HEK293 (cell line): ENCODE measurements at regions of chr15 and their contacts with region 1.

Region 1: DNA sequence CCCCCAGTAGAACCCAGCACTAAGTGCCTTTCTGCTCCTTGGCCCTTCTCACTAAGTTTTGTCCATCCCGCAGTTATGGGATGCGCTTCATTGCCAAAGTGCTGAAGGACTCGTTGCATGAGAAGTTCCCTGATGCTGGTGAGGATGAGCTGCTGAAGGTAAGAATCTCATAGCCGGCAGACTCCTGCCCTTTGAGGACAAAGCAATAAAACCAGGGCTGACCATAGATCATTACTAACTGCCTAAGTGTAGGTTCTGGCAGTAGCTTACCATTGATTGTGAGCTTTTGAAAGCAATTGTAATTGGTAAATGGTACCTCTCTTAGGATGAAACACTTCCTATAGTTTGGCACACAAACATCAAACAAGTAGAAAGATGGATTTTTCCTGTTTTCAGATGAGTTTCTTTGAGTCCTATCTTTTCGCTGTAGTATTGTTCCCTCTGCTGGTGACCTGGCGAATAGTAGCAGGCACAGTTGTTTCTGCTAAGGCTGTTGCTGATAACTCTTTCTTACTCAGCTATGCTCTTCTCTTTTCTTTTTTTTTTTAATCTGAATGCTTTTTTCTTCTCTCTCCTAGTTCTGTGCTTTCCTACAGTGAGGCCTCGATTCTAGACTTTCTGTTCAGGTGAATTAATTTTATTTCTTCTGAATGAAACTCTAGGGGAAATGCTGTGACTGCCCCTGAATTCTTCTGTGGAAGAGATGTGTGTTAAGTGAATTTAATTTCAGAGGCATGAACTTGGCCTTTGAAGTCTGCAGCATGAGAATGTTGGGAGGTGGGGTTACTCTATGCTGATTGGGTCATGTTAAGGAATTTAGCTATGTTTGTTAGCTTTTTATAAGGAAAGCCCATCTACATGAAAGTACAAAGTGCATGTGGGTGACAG is 47.4 kb upstream of the CRTC3 start:
- H3K4me3 ChIP-seq: no peak overlapping the region
- H3K27ac ChIP-seq: no peak overlapping the region
- H3K4me1 ChIP-seq: no peaks in the 10 kb centered on the region
- CTCF ChIP-seq: peak; percentile 80

Region 2: DNA sequence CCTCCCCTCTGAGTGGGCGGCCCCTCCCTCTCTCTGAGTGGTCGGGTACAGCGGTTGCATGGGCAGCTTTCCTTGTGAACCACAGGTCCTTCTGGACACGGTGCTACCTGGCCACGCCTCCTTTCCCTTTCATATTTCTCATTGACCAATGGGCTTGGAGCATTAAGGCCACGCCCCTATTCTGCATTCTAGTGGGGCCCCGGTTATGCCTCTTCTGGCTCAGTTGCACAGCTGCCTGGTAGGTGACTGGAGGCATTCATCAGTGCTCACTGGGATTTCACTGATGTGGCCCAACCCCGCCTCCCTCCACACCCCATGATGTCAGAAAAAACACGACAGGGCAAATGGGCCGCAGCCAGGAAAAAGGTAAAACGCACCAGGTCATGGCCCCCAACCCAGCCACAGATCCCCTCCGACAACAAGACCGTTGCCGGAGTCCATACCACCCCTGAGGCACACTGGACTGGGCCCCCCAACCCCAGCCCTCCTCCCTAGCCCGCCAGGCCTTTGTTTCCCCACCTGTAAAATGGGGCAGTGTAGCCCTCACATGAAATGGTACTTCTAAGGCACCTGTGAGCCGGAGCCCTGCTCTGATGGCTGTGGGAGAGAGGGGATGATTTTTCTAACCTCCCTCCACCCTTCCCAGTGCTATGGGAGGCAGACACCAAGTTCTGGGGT is 190.6 kb before region 1 on chr15:
- CTCF ChIA-PET with region 1: interaction called, 42 read pairs
- POLR2A ChIA-PET with region 1: no interaction called
- H3K4me3 ChIP-seq: no peak overlapping the region
- H3K27ac ChIP-seq: no peak overlapping the region
- H3K4me1 ChIP-seq: no peaks in the 10 kb centered on the region
- CTCF ChIP-seq: no peak

Region 3: DNA sequence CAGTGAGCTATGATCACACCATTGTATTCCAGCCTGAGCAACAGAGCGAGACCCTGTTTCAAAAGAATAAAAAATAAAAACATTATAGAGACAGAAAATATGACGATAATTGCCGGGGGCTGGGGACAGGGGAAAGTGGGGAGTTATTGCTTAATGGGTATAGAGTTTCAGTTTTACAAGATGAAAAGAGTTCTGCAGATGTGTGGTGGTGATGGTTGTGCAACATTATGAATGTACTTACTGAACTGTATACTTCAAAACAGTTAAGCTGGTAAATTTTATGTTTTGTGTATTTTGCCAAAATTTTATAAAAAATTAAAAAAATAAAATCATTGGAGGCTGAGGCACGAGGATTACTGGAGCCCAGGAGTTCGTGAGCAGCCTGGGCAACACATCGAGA is 155.1 kb before region 1 on chr15:
- CTCF ChIA-PET with region 1: interaction called, 225 read pairs
- POLR2A ChIA-PET with region 1: no interaction called
- H3K4me3 ChIP-seq: no peak overlapping the region
- H3K27ac ChIP-seq: no peak overlapping the region
- H3K4me1 ChIP-seq: peaks cover 5% of the 10 kb centered on the region; the same call in 1 of the 2 replicates
- CTCF ChIP-seq: no peak

Region 4: DNA sequence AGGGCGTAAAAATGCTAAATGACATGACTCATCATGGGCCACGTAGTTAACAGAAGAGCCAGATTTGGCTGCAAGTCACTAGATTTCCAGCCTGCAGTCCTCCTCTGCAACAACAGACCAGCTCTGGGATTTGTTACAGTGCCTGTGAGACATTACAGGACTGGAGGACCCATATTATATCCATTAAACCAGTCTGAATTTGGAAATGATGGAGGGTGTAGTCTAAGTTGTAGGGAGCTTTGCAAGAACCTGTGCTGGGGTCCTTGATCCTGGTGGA is 119.5 kb before region 1 on chr15:
- CTCF ChIA-PET with region 1: interaction called, 82 read pairs
- POLR2A ChIA-PET with region 1: interaction called, 4 read pairs
- H3K4me3 ChIP-seq: no peak overlapping the region
- H3K27ac ChIP-seq: no peak overlapping the region
- H3K4me1 ChIP-seq: no peaks in the 10 kb centered on the region
- CTCF ChIP-seq: no peak

Region 5: GRCh38 chr15:90412356-90413194 is 69.8 kb before region 1 on chr15:
- CTCF ChIA-PET with region 1: interaction called, 12 read pairs
- POLR2A ChIA-PET with region 1: no interaction called
- H3K4me3 ChIP-seq: no peak overlapping the region
- H3K27ac ChIP-seq: no peak overlapping the region
- H3K4me1 ChIP-seq: peaks cover 29% of the 10 kb centered on the region
- CTCF ChIP-seq: no peak

Region 6: GRCh38 chr15:90463381-90463780 is 19.0 kb before region 1 on chr15:
- CTCF ChIA-PET with region 1: interaction called, 44 read pairs
- POLR2A ChIA-PET with region 1: no interaction called
- H3K4me3 ChIP-seq: no peak overlapping the region
- H3K27ac ChIP-seq: no peak overlapping the region
- H3K4me1 ChIP-seq: peaks cover 15% of the 10 kb centered on the region
- CTCF ChIP-seq: no peak

Region 7: DNA sequence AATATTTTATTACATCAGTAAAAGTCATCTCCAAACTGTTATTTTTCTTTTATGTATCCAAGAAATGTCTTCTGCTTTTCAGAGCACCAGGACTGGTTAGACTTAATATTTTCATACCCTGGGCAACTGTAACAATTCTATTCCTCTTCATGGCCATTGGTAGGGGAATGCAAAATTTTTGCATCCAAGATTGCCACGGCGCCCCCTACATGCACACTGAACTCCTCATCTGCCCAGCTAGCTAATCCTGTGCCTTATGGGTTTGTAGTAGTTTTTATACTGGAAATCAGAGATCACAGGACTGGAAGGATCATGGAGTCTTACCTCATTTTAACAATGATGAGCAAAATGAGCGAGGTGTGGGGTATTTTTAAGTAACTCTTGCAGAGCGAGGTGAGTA is 121.5 kb after region 1 on chr15:
- CTCF ChIA-PET with region 1: no interaction called
- POLR2A ChIA-PET with region 1: no interaction called
- H3K4me3 ChIP-seq: no peak overlapping the region
- H3K27ac ChIP-seq: no peak overlapping the region
- H3K4me1 ChIP-seq: no peaks in the 10 kb centered on the region; the same call in 1 of the 2 replicates
- CTCF ChIP-seq: no peak

Region 8: DNA sequence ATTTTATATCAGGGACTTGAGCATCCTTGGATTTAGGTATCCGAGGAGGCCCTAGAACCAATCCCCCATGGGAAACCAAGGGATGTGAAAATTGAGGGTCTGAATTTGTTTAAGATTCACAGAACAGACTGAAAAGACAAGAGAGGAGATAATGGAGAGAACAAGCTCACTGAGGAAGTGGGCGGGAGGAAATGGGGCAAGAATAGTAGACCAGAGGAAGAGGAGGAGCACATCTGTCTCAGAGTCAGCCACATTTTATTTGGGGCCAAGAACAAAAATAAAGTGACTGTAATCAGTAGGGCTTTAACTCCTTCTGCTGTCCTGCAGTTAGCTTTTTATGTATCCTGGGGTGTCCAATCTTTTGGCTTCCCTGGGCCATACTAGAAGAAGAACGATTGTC is 298.5 kb after region 1 on chr15:
- CTCF ChIA-PET with region 1: no interaction called
- POLR2A ChIA-PET with region 1: no interaction called
- H3K4me3 ChIP-seq: no peak overlapping the region
- H3K27ac ChIP-seq: no peak overlapping the region
- H3K4me1 ChIP-seq: no peaks in the 10 kb centered on the region
- CTCF ChIP-seq: no peak

Region 9: GRCh38 chr15:90886041-90886614 is 403.8 kb after region 1 on chr15:
- CTCF ChIA-PET with region 1: interaction called, 11 read pairs
- POLR2A ChIA-PET with region 1: no interaction called
- H3K4me3 ChIP-seq: no peak overlapping the region
- H3K27ac ChIP-seq: no peak overlapping the region
- H3K4me1 ChIP-seq: no peaks in the 10 kb centered on the region
- CTCF ChIP-seq: peak; percentile 94